Calu3 (cell line): ENCODE measurements at regions of chr7 and their contacts with region 1.

Region 1: GRCh38 chr7:139341058-139341775 is at the start of gene FMC1:
- DNase-seq: peak; percentile 90
- H3K4me3 Mint-ChIP-seq: peak within 1 kb of the TSS; percentile 94
- H3K27ac Mint-ChIP-seq: peak within 1 kb of the TSS; percentile 100
- H3K4me1 Mint-ChIP-seq: peaks cover 25% of the 10 kb centered on the region
- H3K27me3 Mint-ChIP-seq: peaks cover 13% of the 10 kb centered on the region
- CTCF ChIP-seq: peak; percentile 34
- total RNA-seq, gene FMC1: 2.9 and 9.1 TPM in 2 replicates

Region 2: DNA sequence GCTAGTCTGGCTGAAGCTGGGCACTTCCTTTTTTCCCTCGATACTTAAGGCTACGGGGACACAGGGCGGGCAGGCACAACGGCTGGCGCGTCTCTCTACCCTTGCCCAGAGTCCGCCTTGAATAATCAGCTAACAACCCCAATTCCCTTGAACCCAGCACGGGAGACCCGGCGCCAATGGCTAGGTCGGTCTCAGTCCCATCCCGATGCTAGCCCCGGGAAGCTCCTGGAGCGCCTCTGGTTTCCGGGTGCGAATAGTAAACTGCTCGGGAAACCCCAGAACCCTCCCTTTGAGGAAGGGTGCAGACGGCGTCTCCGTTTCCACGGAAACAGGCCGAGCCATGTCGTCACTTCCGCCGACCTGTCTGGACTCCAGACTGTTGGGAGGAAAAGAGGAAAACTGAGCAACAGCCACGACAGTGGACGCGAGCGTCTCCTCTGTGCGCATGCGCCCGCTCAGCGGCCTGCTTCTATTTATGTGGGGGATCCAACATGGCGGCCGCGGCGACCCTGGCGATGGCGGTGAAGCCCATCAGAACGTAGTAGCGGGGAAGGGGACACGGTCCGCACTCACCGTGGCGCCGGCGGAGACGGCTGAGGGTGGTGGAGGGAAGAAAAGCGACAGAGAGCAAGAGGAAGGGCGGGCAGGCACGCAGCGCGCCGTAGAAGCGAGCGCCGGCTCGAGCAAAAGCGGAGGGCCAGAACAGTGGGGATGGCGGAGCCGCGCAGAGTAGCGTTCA is 110.3 kb before region 1 on chr7 and contains the start of gene UBN2:
- CTCF ChIA-PET with region 1: no interaction called
- intact Hi-C with region 1: no loop called
- DNase-seq: peak; percentile 95
- H3K4me3 Mint-ChIP-seq: peak within 1 kb of the TSS; percentile 81
- H3K27ac Mint-ChIP-seq: peak within 1 kb of the TSS; percentile 82
- H3K4me1 Mint-ChIP-seq: peaks cover 9% of the 10 kb centered on the region
- H3K27me3 Mint-ChIP-seq: no peaks in the 10 kb centered on the region
- CTCF ChIP-seq: no peak
- total RNA-seq, gene UBN2: 19.2 and 23.0 TPM in 2 replicates

Region 3: DNA sequence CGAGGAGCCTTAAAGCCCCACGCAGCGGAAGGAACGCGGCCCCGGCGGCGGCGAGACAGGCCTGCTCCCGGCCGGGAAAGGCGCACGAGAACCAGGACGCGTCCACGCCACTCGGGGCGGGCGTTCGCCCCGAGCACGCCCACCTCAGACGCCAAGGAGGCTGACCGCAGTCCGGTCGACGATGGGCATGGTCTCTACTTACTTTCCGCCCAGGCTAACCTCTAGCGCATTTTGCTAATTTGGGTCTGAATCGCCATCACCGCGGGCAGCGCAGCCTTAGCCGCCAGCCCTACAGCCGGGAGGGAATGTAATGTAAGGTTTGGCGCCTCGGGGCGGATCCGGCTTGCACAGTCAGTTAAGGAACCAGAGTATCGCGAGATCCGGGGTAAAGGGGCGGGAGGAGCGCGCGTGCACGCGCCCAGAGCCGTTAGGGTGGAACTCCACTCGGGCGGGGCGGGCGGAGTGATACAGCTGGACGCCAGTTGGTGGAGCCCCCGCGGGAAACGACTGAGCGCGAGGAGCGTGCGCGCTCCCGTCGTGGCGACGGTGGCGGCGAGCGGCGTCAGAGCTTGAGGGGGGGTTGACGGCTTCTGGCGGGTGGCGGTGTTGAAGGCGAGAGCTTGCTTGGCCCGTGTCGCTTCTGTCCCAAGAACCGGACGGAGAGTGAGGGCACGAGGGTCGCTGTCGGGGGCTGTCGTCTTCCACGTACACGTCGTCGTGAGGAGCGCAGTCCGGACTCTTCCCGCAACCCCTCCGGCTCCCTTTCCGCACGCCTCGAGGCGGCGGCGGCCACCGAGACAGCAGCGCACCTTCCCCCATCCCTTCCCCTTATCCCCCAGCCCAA is 18.4 kb after region 1 on chr7 and contains the start of gene LUC7L2:
- CTCF ChIA-PET with region 1: no interaction called
- intact Hi-C with region 1: loop called (anchors 1 kb)
- DNase-seq: peak; percentile 99
- H3K4me3 Mint-ChIP-seq: peak within 1 kb of the TSS; percentile 91
- H3K27ac Mint-ChIP-seq: peak within 1 kb of the TSS; percentile 84
- H3K4me1 Mint-ChIP-seq: peaks cover 10% of the 10 kb centered on the region
- H3K27me3 Mint-ChIP-seq: no peaks in the 10 kb centered on the region
- CTCF ChIP-seq: no peak
- total RNA-seq, gene LUC7L2: 85.7 and 88.8 TPM in 2 replicates